ENCODE measurements at regions of chr12 and their contacts with region 1.

Region 1: GRCh38 chr12:57899010-57899662 is 42.2 kb upstream of the ATP23 start:
- DNase-seq: peak; percentile 82
- H3K4me3 Mint-ChIP-seq: peak overlapping the region; percentile 25
- H3K27ac Mint-ChIP-seq: peak overlapping the region; percentile 2
- H3K4me1 Mint-ChIP-seq: peaks cover 41% of the 10 kb centered on the region
- H3K27me3 Mint-ChIP-seq: no peaks in the 10 kb centered on the region
- CTCF ChIP-seq: no peak

Region 2: DNA sequence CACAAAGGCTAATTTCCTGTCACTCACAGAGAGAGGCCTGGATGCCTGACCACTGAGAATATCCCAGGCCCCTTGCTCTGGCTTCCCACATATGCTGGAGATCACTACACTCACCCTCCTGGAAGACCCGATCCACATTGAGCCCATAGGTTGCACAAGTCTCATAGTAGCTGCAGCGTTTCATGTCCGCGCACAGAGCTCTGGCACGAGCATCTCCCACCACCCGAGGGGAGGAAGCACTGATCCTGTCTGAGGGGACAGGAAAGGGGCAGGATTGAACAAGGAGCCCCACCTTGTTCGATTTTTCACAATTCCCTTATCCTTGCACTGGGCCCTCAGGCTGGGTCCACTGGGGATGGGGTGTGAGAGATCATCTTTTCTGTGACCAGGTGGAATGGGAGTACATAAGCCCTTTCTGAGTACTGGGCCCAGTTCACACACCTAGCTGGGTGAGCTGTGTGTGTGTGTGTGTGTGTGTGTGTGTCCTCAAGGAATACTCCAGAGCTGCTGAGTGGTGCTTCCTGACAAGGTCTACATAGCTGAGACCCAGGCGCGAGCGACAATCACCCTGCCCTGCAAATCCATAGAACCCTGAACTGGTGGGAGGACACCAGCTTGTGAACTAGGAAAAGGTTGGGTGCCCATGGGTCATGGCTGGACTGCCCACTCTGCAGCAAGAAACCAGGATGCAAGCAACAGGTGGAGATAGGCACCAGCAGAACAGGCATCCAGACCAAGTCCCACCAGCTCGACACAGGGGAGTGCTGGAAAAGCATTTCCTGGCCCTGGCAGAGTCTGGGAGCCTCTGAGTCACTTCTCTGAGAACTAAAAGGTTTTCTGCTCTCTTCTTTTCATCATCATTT is 166.2 kb before region 1 on chr12:
- CTCF ChIA-PET with region 1: no interaction called
- POLR2A ChIA-PET with region 1: no interaction called
- intact Hi-C with region 1: no loop called
- DNase-seq: no peak
- H3K4me3 Mint-ChIP-seq: no peak overlapping the region
- H3K27ac Mint-ChIP-seq: no peak overlapping the region
- H3K4me1 Mint-ChIP-seq: peaks cover 11% of the 10 kb centered on the region
- H3K27me3 Mint-ChIP-seq: peaks cover 38% of the 10 kb centered on the region
- CTCF ChIP-seq: no peak

Region 3: DNA sequence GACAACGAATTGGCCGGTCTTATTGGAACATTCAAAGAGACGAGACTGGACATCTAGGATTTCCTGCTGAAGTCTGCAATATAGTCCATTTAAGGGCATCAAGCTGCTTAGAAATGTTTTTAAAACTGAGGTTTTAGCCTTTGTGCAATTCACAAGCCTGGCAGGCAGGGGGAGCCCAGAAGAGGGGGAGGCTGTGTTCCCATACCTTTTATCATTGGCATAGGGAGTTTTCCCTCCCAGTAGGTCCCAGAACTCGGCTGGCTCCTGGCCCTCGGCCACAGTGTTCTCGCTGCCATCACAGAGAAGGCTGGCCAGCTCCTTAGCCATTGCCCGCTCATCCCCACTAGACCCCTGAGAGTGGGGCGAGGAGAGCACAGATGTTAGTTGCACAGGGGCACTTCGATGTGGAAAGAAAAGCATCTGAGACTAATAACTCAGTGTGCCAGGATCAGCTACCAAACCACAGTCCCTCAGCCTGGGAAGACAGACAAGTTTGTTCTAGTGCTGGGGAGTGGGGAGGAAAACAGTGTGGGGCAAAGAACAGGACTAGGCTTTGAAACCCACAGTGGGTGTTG is 95.7 kb before region 1 on chr12:
- CTCF ChIA-PET with region 1: interaction called, 28 read pairs
- POLR2A ChIA-PET with region 1: interaction called, 5 read pairs
- intact Hi-C with region 1: no loop called
- DNase-seq: peak; percentile 61
- H3K4me3 Mint-ChIP-seq: no peak overlapping the region
- H3K27ac Mint-ChIP-seq: no peak overlapping the region
- H3K4me1 Mint-ChIP-seq: no peaks in the 10 kb centered on the region
- H3K27me3 Mint-ChIP-seq: no peaks in the 10 kb centered on the region
- CTCF ChIP-seq: peak; percentile 84

Region 4: DNA sequence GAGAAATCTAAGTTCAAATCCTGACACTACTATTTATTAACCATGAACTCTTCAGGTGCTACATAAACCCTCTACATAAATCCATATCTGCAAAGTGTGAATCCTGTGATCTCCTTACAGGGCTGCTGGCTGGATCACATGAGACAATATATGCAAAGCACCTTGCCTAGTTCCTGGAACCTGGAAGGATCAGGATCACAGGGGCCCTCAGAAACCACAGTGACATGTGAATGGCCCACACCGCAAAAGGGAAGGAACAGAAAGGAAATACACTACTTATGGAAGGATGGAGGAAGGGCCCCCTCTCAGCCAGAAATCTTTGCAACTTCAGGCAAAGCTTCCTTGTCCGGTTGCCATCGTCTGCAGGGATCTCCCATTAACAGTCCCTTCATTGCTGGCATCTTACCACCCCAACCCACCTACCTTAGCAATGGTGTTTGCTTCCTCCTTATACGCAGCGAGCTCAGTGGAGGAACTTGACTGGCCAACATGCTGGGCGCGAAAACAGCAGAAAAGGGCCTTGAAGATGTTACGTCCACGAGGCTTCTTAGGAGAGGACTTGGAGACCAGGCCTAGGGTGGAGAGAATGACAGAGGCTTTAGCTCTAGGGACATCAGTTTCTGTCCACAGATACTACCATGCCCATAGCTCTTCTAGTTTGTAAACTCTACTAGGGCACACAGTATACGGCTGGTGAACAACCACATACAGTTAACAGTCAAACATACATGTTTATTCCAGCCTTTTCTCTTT is 69.9 kb before region 1 on chr12:
- CTCF ChIA-PET with region 1: interaction called, 138 read pairs
- POLR2A ChIA-PET with region 1: interaction called, 5 read pairs
- intact Hi-C with region 1: no loop called
- DNase-seq: no peak
- H3K4me3 Mint-ChIP-seq: no peak overlapping the region
- H3K27ac Mint-ChIP-seq: no peak overlapping the region
- H3K4me1 Mint-ChIP-seq: peaks cover 12% of the 10 kb centered on the region
- H3K27me3 Mint-ChIP-seq: no peaks in the 10 kb centered on the region
- CTCF ChIP-seq: no peak

Region 5: DNA sequence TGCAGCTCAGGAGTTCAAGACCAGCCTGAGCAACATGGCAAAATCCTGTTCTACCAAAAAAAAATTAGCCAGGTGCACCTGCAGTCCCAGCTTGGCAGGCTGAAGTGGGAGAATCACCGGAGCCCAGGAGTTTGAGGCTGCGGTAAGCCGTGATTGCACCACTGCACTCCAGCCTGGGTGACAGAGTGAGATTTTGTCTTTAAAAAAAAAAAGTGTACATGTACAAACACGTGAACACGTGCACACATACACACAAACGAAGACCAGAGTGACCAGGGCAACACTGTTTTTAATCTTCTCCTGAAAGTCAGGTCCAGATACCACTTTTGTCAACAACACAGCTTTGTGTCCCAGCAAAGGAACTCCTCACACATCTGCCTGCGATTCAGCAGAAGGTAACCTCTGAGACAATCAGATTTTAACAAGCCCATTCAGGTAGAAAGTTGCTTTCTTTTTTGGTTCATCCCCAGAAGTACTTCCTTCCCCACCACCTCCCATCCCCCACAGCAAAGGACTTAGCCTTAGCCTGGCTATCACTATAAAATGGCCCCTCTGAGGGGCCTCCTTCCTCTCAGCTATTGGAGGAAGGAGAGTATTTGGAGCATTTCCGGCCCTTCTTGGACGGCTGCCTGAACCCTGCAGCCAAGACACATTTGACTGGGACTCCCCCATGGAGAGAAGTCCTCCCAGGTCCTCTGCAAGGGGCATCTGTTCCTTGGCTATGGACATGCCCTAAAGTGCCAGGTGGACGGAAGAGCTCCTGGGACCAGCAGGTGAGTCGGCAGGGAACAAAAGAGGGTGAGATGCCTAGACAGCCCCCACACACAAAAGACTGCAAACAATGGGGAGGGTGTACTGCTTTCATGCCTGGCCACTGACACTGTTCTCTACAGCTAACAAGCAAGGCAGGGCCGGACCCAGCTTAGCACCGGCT is 62.4 kb before region 1 on chr12:
- CTCF ChIA-PET with region 1: interaction called, 138 read pairs
- POLR2A ChIA-PET with region 1: interaction called, 167 read pairs
- intact Hi-C with region 1: no loop called
- DNase-seq: peak; percentile 60
- H3K4me3 Mint-ChIP-seq: peak overlapping the region; percentile 46
- H3K27ac Mint-ChIP-seq: peak overlapping the region; percentile 59
- H3K4me1 Mint-ChIP-seq: peaks cover 41% of the 10 kb centered on the region
- H3K27me3 Mint-ChIP-seq: no peaks in the 10 kb centered on the region
- CTCF ChIP-seq: no peak

Region 6: GRCh38 chr12:57846577-57847319 is 52.4 kb before region 1 on chr12 and contains the start of gene CTDSP2:
- CTCF ChIA-PET with region 1: interaction called, 71 read pairs
- POLR2A ChIA-PET with region 1: interaction called, 167 read pairs
- intact Hi-C with region 1: no loop called
- DNase-seq: peak; percentile 98
- H3K4me3 Mint-ChIP-seq: peak within 1 kb of the TSS; percentile 81
- H3K27ac Mint-ChIP-seq: peak within 1 kb of the TSS; percentile 69
- H3K4me1 Mint-ChIP-seq: peaks cover 25% of the 10 kb centered on the region
- H3K27me3 Mint-ChIP-seq: peaks cover 9% of the 10 kb centered on the region
- CTCF ChIP-seq: no peak
- total RNA-seq, gene CTDSP2: 73.4 and 76.5 TPM in 2 replicates

Region 7: DNA sequence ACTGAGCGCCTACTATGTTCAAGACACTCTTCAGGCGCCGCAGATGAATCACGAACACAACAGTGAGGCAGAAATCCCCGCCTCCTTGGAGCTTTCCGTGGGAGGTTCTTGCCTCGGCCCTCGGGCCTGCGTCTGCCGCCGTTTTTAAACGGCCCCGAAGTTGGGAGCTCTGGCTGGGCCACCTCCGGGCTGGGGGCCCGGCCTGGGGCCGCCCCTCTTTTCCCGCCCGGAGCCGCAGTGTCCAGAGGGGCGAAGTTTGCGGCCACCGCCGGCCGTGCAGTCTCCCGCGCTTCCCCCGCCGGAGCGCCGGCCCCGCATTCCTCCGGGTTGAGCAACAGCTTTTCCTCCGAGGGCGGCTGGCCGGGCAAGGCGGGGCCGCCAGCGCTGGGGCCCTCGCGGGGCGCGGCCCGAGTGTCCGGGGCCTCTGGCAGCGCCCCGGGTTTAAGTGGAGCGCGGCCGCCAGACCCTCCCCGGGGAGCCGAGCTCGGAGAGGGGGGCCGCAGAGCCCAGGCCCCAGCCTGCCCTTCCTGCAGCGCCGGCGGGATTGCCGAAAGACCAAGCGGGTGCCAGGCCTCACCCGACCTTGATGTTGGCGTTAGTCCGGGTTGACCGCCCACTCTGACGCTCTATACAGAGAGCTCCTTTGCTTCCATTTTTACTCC is 33.9 kb before region 1 on chr12:
- CTCF ChIA-PET with region 1: interaction called, 10 read pairs
- POLR2A ChIA-PET with region 1: interaction called, 32 read pairs
- intact Hi-C with region 1: no loop called
- DNase-seq: peak; percentile 81
- H3K4me3 Mint-ChIP-seq: peak overlapping the region; percentile 69
- H3K27ac Mint-ChIP-seq: peak overlapping the region; percentile 82
- H3K4me1 Mint-ChIP-seq: peaks cover 23% of the 10 kb centered on the region
- H3K27me3 Mint-ChIP-seq: no peaks in the 10 kb centered on the region
- CTCF ChIP-seq: no peak

Region 8: GRCh38 chr12:57888409-57889157 is 10.6 kb before region 1 on chr12:
- CTCF ChIA-PET with region 1: interaction called, 41 read pairs
- POLR2A ChIA-PET with region 1: interaction called, 77 read pairs
- intact Hi-C with region 1: no loop called
- DNase-seq: peak; percentile 90
- H3K4me3 Mint-ChIP-seq: peak overlapping the region; percentile 63
- H3K27ac Mint-ChIP-seq: peak overlapping the region; percentile 91
- H3K4me1 Mint-ChIP-seq: peaks cover 49% of the 10 kb centered on the region
- H3K27me3 Mint-ChIP-seq: no peaks in the 10 kb centered on the region
- CTCF ChIP-seq: no peak